Kidney (tissue), 22 donors: ENCODE measurements at regions of chr12 and their contacts with region 1.

Region 1: GRCh38 chr12:53336181-53336681 is at the start of gene SP7:
- DNase-seq: no peak
- H3K4me3 ChIP-seq: no peak within 1 kb of the TSS
- H3K27ac ChIP-seq: no peak within 1 kb of the TSS
- H3K4me1 ChIP-seq: no peaks in the 10 kb centered on the region
- H3K27me3 ChIP-seq: peaks cover 2% of the 10 kb centered on the region
- CTCF ChIP-seq: no peak
- total RNA-seq, gene SP7: not detected

Region 2: DNA sequence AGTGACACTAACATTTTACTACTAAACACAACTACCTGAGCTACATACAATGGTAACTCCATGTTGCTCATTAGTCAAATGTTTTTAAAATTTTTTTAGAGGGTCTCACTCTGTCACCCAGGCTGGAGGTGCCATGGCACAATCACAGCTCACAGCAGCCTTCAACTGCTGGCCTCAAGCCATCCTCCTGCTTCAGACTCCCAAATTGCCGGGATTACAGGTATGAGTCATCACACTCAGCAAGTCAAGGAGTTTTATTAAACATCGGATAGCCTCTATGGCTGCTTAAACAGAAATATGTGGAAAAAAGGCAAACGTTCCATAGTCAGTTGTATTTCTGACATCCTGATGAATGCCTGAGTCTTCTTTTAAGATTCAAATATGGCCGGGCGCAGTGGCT is 182.2 kb after region 1 on chr12:
- intact Hi-C with region 1: loop called (anchors 10 kb)
- DNase-seq: no peak
- H3K4me3 ChIP-seq: no peak overlapping the region
- H3K27ac ChIP-seq: no peak overlapping the region
- H3K4me1 ChIP-seq: no peaks in the 10 kb centered on the region
- H3K27me3 ChIP-seq: no peaks in the 10 kb centered on the region
- CTCF ChIP-seq: no peak

Region 3: GRCh38 chr12:53538196-53538689 is 202.0 kb after region 1 on chr12:
- intact Hi-C with region 1: no loop called
- DNase-seq: no peak
- H3K4me3 ChIP-seq: no peak overlapping the region
- H3K27ac ChIP-seq: no peak overlapping the region
- H3K4me1 ChIP-seq: no peaks in the 10 kb centered on the region
- H3K27me3 ChIP-seq: no peaks in the 10 kb centered on the region
- CTCF ChIP-seq: no peak